ENCODE measurements at regions of chr10 and their contacts with region 1.

Region 1: GRCh38 chr10:29297678-29298077 is 8.8 kb downstream of the LYZL1 start:
- DNase-seq: no peak
- H3K4me3 ChIP-seq: no peak overlapping the region
- H3K27ac ChIP-seq: no peak overlapping the region
- H3K27me3 ChIP-seq: peaks cover 0 to 4% (median 0%) of the 10 kb centered on the region in 45 donors
- CTCF ChIP-seq: no peak

Region 2: DNA sequence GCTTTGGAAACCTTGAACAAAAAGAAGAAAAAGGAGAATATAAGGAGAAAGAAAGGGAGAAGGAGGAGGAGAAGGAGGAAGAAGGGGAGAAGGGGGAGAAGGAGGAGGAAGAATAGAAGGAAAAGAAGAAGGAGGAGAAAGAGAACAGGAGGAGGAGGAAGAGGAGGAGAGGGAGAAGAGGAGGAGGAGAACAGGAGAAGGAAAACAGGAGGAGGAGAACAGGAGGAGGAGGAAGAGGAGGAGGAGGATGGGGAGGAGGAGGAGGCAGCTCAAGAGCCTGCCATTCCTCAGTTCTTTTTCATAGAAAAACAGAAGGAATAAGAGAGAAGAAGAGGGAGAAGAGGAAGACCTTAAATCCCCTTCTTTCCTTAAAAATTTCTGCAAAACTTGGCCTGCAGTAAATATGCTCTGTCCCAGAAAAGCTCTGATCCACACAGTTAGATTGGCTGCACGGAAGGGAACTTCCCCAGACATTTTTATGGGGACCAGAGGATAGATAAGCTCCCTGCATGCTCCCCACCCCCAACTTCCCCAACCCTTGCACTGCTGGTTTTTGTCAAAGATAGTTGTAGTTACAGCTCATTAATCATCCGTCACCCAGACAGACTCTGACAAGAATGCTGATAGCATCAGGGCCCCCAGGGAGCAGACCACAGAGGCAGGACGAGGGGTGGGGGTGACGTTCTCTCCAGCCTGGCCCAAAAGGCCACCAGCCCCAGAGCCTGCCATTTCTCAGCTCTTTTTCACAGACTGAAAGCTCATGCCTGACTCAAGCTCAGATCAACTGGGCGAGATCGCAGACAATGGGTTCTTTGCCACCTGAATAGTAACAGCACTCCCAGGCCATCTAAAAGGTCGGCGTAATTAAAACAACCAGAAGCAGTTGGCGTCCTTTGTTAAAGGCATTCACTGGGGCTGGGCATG is 43.3 kb before region 1 on chr10:
- intact Hi-C with region 1: loop called (anchors 5 kb)
- DNase-seq: no peak
- H3K4me3 ChIP-seq: no peak overlapping the region
- H3K27ac ChIP-seq: no peak overlapping the region
- H3K27me3 ChIP-seq: peaks cover 0 to 9% (median 0%) of the 10 kb centered on the region in 45 donors
- CTCF ChIP-seq: no peak

Region 3: DNA sequence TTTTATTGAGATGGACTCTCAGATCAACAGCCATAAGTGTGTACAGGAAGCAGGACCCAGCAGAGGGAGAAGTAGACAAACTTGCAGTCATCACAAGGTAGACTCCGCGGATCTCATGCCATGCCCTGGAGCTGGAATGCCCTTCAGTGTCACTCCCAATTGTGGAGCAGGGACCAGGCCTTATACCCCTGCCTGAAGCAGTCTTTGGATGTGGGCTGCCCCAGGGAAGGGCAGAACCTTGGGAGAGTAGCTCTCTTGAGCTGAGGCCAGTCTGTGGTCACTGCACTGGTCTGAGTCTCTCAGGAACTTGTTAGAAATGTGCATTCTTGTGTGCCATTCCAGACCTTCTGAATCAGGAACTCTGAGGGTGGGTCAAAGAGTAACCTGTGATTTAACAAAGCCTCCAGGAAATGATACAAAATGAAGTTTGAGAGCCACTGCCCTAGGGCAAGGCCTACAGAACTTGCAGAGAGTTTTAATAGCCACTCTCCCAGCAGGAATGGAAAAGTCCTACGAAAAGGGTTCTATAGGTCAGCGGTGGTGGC is 59.2 kb after region 1 on chr10:
- intact Hi-C with region 1: no loop called
- DNase-seq: no peak
- H3K4me3 ChIP-seq: no peak overlapping the region
- H3K27ac ChIP-seq: no peak overlapping the region
- H3K27me3 ChIP-seq: no peaks in the 10 kb centered on the region
- CTCF ChIP-seq: no peak

Region 4: GRCh38 chr10:29772403-29772802 is 474.7 kb after region 1 on chr10:
- intact Hi-C with region 1: no loop called
- DNase-seq: no peak
- H3K4me3 ChIP-seq: no peak overlapping the region
- H3K27ac ChIP-seq: no peak overlapping the region
- H3K27me3 ChIP-seq: peaks cover 0 to 15% (median 0%) of the 10 kb centered on the region in 45 donors
- CTCF ChIP-seq: no peak

Measured in dorsolateral prefrontal cortex (tissue), 120 donors.